K562 (cell line): ENCODE measurements at regions of chr18 and their contacts with region 1.

Region 1: DNA sequence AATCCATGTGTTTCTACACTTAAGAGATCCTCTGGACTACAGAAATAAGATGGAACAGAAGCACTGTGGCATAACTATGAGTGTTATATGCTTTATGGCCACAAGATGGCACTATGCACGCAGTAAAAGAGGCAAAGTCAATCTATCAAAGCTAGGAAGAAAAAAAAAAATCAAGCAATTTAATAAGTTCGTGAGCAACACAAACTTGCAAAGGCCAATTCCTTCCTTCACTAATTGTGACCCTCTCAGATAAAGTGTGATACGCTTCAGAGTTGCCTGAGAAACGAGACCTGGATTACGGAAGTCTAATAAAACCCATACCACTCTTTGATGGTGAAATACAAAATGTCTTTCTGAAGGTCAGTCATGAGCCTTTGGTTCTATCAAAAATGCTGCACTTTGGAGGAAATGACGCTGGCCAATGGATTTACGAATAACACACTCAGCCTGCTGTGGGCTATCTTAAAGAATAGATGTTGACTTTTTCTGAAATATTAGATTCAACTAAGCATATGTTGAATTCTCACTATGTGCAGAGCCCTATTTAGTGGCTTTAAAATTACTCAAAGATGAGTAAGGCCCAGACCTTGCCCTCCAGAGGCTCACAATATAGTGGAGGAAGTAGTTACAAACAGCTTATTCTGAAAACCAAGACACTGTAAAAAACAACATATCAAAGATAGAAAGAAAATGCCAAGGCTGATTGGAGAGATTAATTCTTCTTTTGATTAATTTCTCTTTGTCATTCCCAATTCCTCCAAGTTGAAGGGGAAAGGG is 35.5 kb upstream of the TTR start:
- DNase-seq: peak; percentile 56 to 75 (median 60)
- ATAC-seq: peak; percentile 82
- H3K4me3 ChIP-seq: no peak overlapping the region
- H3K27ac ChIP-seq: no peak overlapping the region
- H3K4me1 ChIP-seq: no peaks in the 10 kb centered on the region
- H3K27me3 ChIP-seq: peaks cover 3 to 8% of the 10 kb centered on the region in 2 experiments; a peak in 2 of 5 replicates
- CTCF ChIP-seq: peak; percentile 51 to 92 (median 75); a peak in 5 of 6 replicates
- EP300 ChIP-seq: no peak
- POLR2A ChIP-seq: no peak
- RAD21 ChIP-seq: peak; percentile 92 to 97

Region 2: DNA sequence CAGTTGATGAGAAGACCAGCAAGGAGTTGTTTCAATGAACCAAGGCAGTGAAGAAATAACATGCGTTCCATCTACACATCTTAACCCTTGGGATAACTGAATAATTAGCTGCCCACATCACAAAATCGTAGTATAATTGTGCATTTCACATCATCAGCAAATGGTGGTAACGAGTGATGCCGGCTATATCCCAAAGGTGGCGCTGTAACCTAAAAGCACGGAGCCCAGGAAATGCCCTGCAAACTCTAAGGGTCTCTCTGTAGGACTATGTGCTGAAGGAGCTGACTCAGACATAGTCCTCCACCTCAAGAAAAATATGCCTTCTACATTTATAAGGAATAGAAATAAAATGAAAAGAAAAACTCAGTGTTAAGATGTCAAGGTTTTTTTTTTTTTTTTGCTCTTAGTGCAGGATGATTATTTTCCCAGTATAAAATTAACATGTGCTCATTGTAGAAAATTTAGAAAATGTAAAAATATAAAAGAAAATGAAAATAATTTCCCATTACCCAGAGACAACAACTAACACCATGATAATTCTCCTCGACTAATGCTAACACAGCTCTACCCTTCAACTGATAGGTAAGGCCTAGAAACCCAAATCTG is 131.7 kb before region 1 on chr18:
- CTCF ChIA-PET with region 1: interaction called, 6 read pairs
- POLR2A ChIA-PET with region 1: no interaction called
- in situ Hi-C with region 1: no loop called
- intact Hi-C with region 1: loop called (anchors 2 kb)
- DNase-seq: peak; percentile 23 to 69 (median 34)
- ATAC-seq: peak; percentile 92
- H3K4me3 ChIP-seq: no peak overlapping the region
- H3K27ac ChIP-seq: no peak overlapping the region
- H3K4me1 ChIP-seq: 0 out of 5 replicates have a peak, but pooled peaks cover 0 to 5% of the 10 kb centered on the region in 2 experiments
- H3K27me3 ChIP-seq: no peaks in the 10 kb centered on the region
- CTCF ChIP-seq: peak; percentile 81 to 91 (median 86)
- EP300 ChIP-seq: no peak
- POLR2A ChIP-seq: no peak
- RAD21 ChIP-seq: peak; percentile 82 to 89

Region 3: DNA sequence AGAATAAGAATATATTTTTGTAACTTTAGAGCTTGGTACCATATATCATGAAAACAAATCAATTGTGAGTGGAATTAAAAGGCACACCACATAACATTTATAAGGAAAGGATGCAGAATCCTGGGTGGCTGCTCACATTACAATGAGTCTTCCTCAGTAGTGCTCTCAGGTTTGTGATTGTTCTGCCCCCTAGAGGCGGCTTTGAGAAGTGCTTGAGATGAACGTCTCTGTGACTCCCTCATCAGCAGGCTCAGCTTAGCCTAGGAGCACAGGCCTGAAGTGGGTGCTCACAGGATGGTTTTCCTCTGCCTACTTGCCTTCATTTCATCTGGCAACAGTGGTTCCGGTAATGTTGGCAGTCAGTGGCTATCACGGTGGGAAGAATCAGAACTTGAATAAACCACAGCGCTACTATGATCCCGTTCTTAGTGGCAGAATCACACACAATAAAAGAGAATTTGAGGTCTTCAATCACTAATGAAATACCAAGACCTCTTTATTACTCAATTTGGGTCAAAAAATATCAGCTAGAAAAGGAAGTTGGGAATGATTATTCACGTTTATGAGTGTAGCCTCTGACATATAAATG is 166.3 kb after region 1 on chr18:
- CTCF ChIA-PET with region 1: interaction called, 4 read pairs
- POLR2A ChIA-PET with region 1: no interaction called
- in situ Hi-C with region 1: no loop called
- intact Hi-C with region 1: loop called (anchors 1 kb)
- DNase-seq: peak; percentile 75 to 87 (median 80)
- ATAC-seq: peak; percentile 98
- H3K4me3 ChIP-seq: no peak overlapping the region
- H3K27ac ChIP-seq: no peak overlapping the region
- H3K4me1 ChIP-seq: peaks cover 0 to 6% of the 10 kb centered on the region in 2 experiments; a peak in 1 of 5 replicates
- H3K27me3 ChIP-seq: peaks cover 9 to 22% of the 10 kb centered on the region in 2 experiments; a peak in 4 of 5 replicates
- CTCF ChIP-seq: peak; percentile 79 to 91 (median 84)
- EP300 ChIP-seq: no peak
- POLR2A ChIP-seq: no peak
- RAD21 ChIP-seq: peak; percentile 79 to 90

Region 4: DNA sequence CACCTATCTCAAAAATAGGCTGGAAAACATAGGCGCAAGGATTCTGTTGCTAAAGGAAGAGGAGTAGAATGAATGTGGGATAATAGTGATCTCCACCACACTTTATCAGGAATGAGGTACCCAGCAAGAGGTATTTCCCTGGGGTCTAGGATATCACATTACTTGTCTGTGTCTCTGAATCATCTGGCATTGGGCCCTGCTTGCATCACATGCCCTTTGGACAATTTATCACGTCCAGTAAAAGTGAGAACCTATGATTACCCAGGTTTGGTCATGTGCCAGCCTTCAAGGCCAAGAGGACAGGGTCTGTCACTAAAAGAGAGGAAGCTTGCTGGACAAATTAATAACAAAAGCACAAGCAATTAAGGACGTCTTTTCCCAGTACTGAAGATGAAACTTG is 398.2 kb after region 1 on chr18:
- CTCF ChIA-PET with region 1: interaction called, 5 read pairs
- POLR2A ChIA-PET with region 1: interaction called, 4 read pairs
- in situ Hi-C with region 1: no loop called
- intact Hi-C with region 1: loop called (anchors 1 kb)
- DNase-seq: no peak
- ATAC-seq: no peak
- H3K4me3 ChIP-seq: no peak overlapping the region
- H3K27ac ChIP-seq: no peak overlapping the region
- H3K4me1 ChIP-seq: 0 out of 5 replicates have a peak, but pooled peaks cover 0 to 4% of the 10 kb centered on the region in 2 experiments
- H3K27me3 ChIP-seq: no peaks in the 10 kb centered on the region
- CTCF ChIP-seq: no peak
- EP300 ChIP-seq: no peak
- POLR2A ChIP-seq: no peak
- RAD21 ChIP-seq: no peak